Colonic mucosa (tissue), 4 donors: ENCODE measurements at regions of chr5 and their contacts with region 1.

Region 1: DNA sequence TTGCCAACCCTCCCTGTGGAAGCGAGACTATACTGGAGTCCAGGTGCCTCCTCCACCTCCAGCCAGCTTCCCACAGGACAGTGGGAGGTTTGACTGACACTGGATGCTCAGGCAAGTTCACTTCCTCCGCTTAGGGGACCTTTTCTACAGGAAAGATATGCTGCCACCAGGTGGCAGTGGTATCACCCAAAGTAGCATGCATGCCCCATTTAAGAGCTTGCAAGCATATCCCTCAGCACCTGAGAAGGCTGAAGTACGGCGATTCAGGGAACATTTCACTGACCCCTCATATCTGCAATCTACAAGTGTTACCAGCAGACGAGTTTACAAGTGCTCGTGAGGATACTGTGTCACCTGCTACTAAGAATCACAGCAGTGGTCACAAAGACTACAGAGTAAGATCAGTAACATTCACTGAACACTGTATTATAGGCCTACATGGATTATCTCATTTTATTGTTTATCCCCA is 75.5 kb downstream of the KLHL3 start:
- DNase-seq: peak; percentile 76
- H3K4me3 ChIP-seq: no peak overlapping the region
- H3K27ac ChIP-seq: no peak overlapping the region
- H3K4me1 ChIP-seq: no peaks in the 10 kb centered on the region
- H3K27me3 ChIP-seq: no peaks in the 10 kb centered on the region
- CTCF ChIP-seq: peak; percentile 60

Region 2: DNA sequence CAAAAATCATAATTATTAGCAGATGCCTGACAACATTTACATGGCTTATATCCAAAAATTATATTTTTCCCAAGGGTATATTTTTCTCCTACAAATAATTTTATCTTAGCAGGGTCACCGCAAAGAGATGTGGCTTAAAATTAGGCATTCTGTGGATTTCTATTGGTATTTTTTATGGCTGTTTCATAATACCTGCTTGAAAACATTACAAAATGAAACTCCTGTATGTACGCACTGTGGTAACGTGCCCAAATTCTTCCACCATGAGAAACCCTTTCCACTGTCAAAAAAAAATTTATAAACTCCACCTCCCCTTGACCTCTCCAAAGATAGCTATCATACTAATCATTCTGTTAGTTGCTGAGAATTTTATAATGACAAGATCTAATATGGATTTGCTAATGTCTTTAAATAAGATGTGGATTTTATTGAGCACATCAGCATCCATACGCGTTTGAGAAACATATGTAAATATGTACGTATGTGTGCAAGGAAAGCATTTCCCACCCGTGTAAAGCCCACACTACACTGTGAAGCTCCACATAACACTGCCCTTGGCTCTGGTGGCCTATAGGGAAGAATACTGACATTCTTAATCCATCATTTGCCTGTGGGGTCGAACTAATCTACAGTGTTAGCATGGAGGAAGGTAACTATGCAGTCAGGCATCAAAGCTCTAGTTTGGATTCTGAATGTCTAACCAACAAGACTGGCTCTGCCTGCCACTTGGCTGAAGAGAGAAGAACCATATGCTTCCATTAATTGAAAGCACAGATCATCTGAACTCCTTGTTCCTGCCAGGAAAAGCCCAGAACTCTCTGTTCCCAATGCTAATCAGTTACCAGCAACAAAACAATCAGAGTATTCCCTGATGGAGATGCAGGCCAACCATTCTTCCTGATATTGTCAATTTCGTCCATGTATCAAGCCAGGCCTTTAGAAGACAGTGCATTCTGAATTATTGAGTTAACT is 406.0 kb before region 1 on chr5:
- intact Hi-C with region 1: no loop called
- DNase-seq: no peak
- H3K4me3 ChIP-seq: no peak overlapping the region
- H3K27ac ChIP-seq: no peak overlapping the region
- H3K4me1 ChIP-seq: no peaks in the 10 kb centered on the region
- H3K27me3 ChIP-seq: no peaks in the 10 kb centered on the region
- CTCF ChIP-seq: no peak

Region 3: GRCh38 chr5:137735555-137736284 is 75.3 kb after region 1 on chr5 and contains the start of gene KLHL3:
- intact Hi-C with region 1: loop called (anchors 2 kb)
- DNase-seq: peak; percentile 48
- H3K4me3 ChIP-seq: peak within 1 kb of the TSS; percentile 38
- H3K27ac ChIP-seq: peak within 1 kb of the TSS; percentile 52
- H3K4me1 ChIP-seq: no peaks in the 10 kb centered on the region
- H3K27me3 ChIP-seq: no peaks in the 10 kb centered on the region
- CTCF ChIP-seq: no peak
- total RNA-seq, gene KLHL3: 4.4 to 6.3 TPM

Region 4: GRCh38 chr5:137743031-137743640 is 82.8 kb after region 1 on chr5:
- intact Hi-C with region 1: loop called (anchors 2 kb)
- DNase-seq: peak; percentile 75
- H3K4me3 ChIP-seq: no peak overlapping the region
- H3K27ac ChIP-seq: no peak overlapping the region
- H3K4me1 ChIP-seq: no peaks in the 10 kb centered on the region
- H3K27me3 ChIP-seq: no peaks in the 10 kb centered on the region
- CTCF ChIP-seq: peak; percentile 42

Region 5: DNA sequence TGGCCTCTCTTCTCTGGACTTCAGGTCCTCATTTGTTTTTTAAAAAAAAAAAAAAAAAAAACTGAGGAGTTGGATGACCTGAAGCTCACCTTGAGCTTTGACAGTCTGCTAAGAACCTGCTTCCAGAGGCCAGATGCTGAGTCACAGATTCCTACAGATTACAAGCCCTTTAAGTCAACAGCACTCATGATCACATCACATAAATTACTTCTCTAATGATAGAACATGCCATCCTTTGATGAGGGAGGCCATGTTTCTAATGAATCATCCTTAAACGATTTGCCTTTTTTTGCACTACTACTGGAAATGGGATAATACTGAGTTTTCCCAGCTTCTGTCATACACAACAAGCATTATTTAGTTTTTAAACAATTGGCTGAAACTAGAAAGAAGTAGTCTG is 173.1 kb after region 1 on chr5:
- intact Hi-C with region 1: no loop called
- DNase-seq: no peak
- H3K4me3 ChIP-seq: no peak overlapping the region
- H3K27ac ChIP-seq: no peak overlapping the region
- H3K4me1 ChIP-seq: no peaks in the 10 kb centered on the region
- H3K27me3 ChIP-seq: no peaks in the 10 kb centered on the region
- CTCF ChIP-seq: no peak